Aorta (tissue), 5 donors: ENCODE measurements at regions of chr11 and their contacts with region 1.

Region 1: DNA sequence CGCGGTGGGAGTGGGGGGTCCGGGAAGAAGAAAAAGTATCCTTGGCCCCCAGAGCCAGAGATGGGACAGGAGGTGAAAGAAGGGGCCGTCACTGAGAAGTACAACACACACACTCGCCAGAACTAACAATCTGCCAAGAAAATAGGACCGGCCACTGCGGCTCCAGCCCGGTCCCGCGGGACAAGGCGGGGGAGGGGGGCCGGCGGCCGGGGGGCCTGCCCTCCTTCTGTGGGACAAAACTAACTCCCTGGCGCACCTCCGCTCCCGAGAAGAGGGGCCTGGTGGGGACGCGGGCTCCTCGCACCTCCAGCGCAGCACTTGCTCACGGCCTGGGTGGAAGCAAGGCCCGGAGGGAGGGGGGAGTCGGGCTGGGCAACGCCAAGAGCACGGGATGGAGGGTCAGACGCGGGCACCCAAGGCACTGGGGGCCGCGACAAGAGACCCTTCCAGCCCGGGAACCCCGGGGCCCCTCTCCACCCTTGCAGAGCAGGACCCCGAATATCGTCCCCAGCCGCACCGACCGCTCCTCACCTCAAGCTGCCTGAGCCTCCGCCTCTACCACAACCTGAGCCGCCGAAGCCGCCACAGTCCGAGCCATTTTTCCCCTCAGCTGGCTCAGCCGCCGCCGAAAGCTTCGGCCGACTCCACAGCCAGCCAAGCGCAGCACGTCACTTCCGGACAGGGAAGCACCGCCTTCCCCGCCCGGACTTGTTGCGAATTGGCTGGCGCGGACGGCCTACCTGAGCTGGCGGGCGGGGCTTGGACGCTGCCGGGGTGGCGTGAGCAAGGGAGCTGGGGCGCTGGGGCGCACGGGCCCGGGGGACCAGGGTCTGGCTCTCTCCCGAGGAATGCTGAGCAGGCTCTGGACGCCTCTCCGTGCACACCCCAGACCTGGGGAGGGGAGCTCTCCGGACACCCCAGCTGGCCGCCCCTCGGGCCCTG is at the start of gene PIK3C2A:
- DNase-seq: peak; percentile 98 to 99
- ATAC-seq: peak; percentile 98
- H3K4me3 ChIP-seq: peak within 1 kb of the TSS; percentile 59 to 68
- H3K27ac ChIP-seq: peak within 1 kb of the TSS; percentile 30 to 92
- H3K4me1 ChIP-seq: no peaks in the 10 kb centered on the region
- H3K27me3 ChIP-seq: no peaks in the 10 kb centered on the region
- total RNA-seq, gene PIK3C2A: 100 to 110 TPM

Region 2: GRCh38 chr11:17077520-17078401 is 129.8 kb before region 1 on chr11 and contains the start of gene RPS13:
- intact Hi-C with region 1: loop called in 1 of 2 experiments (anchors 10 kb)
- DNase-seq: peak; percentile 98
- ATAC-seq: peak; percentile 99
- H3K4me3 ChIP-seq: peak within 1 kb of the TSS; percentile 73 to 84
- H3K27ac ChIP-seq: peak within 1 kb of the TSS; percentile 37 to 55
- H3K4me1 ChIP-seq: peaks cover 0 to 3% of the 10 kb centered on the region in 2 donors
- H3K27me3 ChIP-seq: no peaks in the 10 kb centered on the region
- total RNA-seq, gene RPS13: 699 to 761 TPM

Region 3: GRCh38 chr11:17154409-17155159 is 53.0 kb before region 1 on chr11:
- intact Hi-C with region 1: loop called in 1 of 2 experiments (anchors 5 kb)
- DNase-seq: no peak
- ATAC-seq: no peak
- H3K4me3 ChIP-seq: no peak overlapping the region
- H3K27ac ChIP-seq: peak overlapping the region in 1 of 2 donors; percentile 76
- H3K4me1 ChIP-seq: peaks cover 4 to 5% of the 10 kb centered on the region in 2 donors
- H3K27me3 ChIP-seq: no peaks in the 10 kb centered on the region

Region 4: DNA sequence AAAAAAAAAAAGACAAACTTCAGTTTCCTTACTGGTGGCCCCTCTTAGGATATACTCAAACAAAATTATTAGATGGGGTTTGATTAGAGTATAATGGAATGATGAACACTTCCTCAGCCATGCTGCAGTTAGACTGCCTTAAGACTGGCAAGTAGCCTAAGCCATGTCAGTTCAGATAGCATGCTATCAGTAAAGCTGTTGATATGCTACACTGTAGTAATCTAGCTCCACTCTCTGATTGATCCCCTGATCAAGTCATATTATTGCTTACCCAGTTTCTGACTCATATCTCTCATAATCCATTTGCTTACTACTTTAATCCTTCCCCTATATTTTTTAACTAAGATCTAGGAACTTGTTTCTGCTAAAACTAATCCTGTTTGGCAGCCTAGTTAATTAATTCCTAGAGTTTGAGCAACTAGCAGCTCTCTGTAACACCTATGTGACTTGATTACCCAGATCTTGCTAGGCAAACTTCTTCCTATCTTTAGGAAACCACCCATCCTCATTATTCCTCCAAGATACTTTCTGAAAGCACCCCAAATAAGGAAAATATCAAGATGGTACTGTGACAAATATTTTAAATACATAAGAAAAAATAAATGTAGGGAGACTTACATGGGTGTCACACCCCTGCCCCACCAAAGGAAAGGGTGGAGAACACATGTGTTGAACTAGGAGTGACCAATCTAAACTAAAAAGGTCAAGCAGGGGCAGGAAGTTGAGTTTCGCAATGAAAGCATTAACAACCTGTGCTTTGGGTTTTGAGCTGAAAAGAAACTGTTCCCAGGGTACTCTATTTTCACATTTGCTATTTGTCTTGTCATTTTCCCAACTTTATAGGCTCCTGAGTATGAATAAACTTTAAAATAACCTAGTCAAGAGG is 43.0 kb before region 1 on chr11:
- intact Hi-C with region 1: loop called in 1 of 2 experiments (anchors 5 kb)
- DNase-seq: no peak
- ATAC-seq: no peak
- H3K4me3 ChIP-seq: no peak overlapping the region
- H3K27ac ChIP-seq: no peak overlapping the region
- H3K4me1 ChIP-seq: peaks cover 1 to 2% of the 10 kb centered on the region in 2 donors
- H3K27me3 ChIP-seq: no peaks in the 10 kb centered on the region

Region 5: DNA sequence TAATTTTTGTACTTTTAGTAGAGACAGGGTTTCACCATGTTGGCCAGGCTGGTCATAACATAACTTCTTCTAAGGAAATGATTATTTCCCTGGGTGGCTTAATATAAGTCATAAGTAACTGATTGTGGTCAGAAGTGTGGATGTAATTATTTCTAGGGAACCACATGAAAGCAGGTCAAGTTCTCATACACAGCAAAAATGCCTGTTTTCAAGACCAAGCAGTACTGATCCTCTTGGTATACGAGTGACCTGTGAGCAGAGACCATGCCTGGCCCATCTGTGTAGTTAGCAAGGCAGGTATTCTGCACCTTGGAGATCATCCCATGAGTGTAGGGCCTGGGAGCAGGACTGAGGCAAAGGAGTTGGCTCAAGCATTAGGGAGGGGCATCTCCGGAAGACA is 36.5 kb after region 1 on chr11:
- intact Hi-C with region 1: no loop called
- DNase-seq: no peak
- ATAC-seq: no peak
- H3K4me3 ChIP-seq: no peak overlapping the region
- H3K27ac ChIP-seq: no peak overlapping the region
- H3K4me1 ChIP-seq: no peaks in the 10 kb centered on the region
- H3K27me3 ChIP-seq: no peaks in the 10 kb centered on the region

Region 6: GRCh38 chr11:17276236-17277023 is 68.8 kb after region 1 on chr11 and contains the start of gene NUCB2:
- intact Hi-C with region 1: loop called (anchors 5 kb)
- DNase-seq: peak; percentile 98 to 99
- ATAC-seq: peak; percentile 100
- H3K4me3 ChIP-seq: peak within 1 kb of the TSS; percentile 61 to 78
- H3K27ac ChIP-seq: peak within 1 kb of the TSS; percentile 62 to 92
- H3K4me1 ChIP-seq: no peaks in the 10 kb centered on the region
- H3K27me3 ChIP-seq: no peaks in the 10 kb centered on the region
- total RNA-seq, gene NUCB2: 108 to 130 TPM

Region 7: DNA sequence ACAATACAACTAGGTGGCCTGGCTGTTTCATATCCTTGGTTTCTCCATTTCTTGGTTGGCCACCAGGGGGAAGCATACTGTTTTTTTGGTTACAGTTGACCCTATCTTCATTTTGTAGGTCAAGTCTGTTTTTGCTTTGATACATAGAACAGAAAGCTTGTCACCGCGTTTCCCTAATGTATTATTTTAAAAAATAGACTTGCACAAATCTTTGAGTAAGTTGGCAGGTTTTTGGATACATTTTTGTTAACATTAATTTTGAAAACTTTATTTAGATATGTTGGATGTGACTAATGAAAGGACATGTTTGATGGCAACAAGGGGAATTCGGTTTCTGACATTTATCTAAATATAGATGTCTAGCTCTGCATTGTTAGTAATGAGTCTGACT is 147.0 kb after region 1 on chr11:
- intact Hi-C with region 1: loop called in 1 of 2 experiments (anchors 10 kb)
- DNase-seq: no peak
- ATAC-seq: peak; percentile 59
- H3K4me3 ChIP-seq: no peak overlapping the region
- H3K27ac ChIP-seq: no peak overlapping the region
- H3K4me1 ChIP-seq: no peaks in the 10 kb centered on the region
- H3K27me3 ChIP-seq: no peaks in the 10 kb centered on the region